Right cardiac atrium (tissue), 5 donors: ENCODE measurements at regions of chr3 and their contacts with region 1.

Region 1: DNA sequence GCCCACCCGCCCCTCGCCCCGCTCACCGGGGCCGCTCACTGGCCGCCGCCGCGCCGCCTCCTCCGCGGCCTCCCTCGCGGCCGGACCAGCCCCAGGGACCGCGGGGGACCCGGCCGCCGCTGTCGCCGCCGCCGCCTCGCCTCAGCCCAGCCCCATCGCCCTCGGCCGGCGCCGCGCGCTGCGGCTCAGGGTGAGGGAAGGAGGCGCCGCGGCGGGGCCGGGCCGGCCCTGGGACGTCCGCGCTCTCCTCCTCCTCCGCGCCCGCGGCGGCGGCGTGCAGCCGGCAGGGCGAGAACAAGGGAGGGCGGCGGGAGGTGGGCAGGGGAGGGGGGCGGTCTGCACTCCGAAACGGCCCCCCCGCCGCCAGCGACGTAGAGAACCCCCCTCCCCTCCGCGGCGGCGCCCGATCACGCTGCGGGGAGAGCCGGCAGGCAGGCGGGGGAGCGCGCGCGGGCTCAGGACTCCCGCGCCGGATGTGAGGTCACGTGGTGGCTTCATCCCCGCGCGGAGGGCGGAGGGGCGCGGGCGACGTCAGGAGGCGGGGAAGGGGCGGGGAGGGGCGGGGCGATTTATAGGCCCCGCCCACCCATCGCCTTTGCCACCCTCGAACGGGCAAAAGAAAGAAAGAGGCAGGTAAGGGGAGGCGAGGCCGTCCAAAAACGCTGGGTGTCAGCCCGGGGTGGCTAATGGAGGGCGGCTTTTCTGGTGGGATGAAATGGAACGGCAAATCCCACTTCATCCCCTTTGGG is at the start of gene ATP13A3:
- DNase-seq: peak; percentile 90 to 96 (median 96)
- ATAC-seq: peak; percentile 93 to 96
- H3K4me3 ChIP-seq: peak within 1 kb of the TSS; percentile 97
- H3K27ac ChIP-seq: peak within 1 kb of the TSS; percentile 95
- H3K4me1 ChIP-seq: peaks cover 4% of the 10 kb centered on the region
- H3K27me3 ChIP-seq: no peaks in the 10 kb centered on the region
- total RNA-seq, gene ATP13A3: 79.9 to 194 (median 93.6) TPM

Region 2: GRCh38 chr3:192892981-192893700 is 1593.6 kb before region 1 on chr3:
- intact Hi-C with region 1: no loop called
- DNase-seq: peak; percentile 36 to 58 (median 56)
- ATAC-seq: peak in 1 of 2 donors; percentile 61
- H3K4me3 ChIP-seq: no peak overlapping the region
- H3K27ac ChIP-seq: no peak overlapping the region
- H3K4me1 ChIP-seq: peaks cover 4% of the 10 kb centered on the region
- H3K27me3 ChIP-seq: no peaks in the 10 kb centered on the region

Region 3: GRCh38 chr3:194573691-194574437 is 87.2 kb after region 1 on chr3:
- intact Hi-C with region 1: loop called in 1 of 4 experiments (anchors 5 kb)
- DNase-seq: peak; percentile 46 to 72 (median 67)
- ATAC-seq: peak; percentile 48 to 52
- H3K4me3 ChIP-seq: no peak overlapping the region
- H3K27ac ChIP-seq: no peak overlapping the region
- H3K4me1 ChIP-seq: peaks cover 18% of the 10 kb centered on the region
- H3K27me3 ChIP-seq: no peaks in the 10 kb centered on the region

Region 4: GRCh38 chr3:194782698-194783404 is 296.1 kb after region 1 on chr3:
- intact Hi-C with region 1: no loop called
- DNase-seq: no peak
- ATAC-seq: no peak
- H3K4me3 ChIP-seq: no peak overlapping the region
- H3K27ac ChIP-seq: no peak overlapping the region
- H3K4me1 ChIP-seq: peaks cover 7% of the 10 kb centered on the region
- H3K27me3 ChIP-seq: no peaks in the 10 kb centered on the region